AG04449 (cell line): ENCODE measurements at regions of chr11 and their contacts with region 1.

Region 1: GRCh38 chr11:75706260-75706729 is 11.3 kb upstream of the MOGAT2 start:
- DNase-seq: no peak
- H3K4me3 ChIP-seq: no peak overlapping the region
- CTCF ChIP-seq: peak; percentile 93

Region 2: DNA sequence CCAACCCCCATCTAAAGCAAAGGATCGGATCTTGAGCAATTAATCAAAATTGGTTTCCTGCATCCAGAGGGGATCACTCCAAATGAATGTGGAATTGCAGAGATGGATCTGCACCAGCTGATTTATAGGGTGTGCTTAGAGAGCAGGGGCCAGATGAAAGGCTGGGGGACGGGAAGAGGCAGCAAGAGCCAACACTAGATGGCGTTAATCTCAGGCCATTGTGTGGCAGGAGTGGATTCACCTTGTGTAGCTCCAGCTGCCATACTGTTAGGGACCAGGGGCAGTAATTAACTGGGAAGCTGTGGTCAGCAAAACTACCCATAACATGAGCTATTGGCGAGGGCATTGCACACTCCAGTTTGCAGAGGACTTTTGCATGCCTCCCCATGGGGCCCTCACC is 108.7 kb before region 1 on chr11:
- CTCF ChIA-PET with region 1: interaction called, 12 read pairs
- POLR2A ChIA-PET with region 1: no interaction called
- DNase-seq: no peak
- H3K4me3 ChIP-seq: no peak overlapping the region
- CTCF ChIP-seq: peak; percentile 66

Region 3: GRCh38 chr11:75678620-75679259 is 27.6 kb before region 1 on chr11:
- CTCF ChIA-PET with region 1: interaction called, 15 read pairs
- POLR2A ChIA-PET with region 1: no interaction called
- DNase-seq: no peak
- H3K4me3 ChIP-seq: no peak overlapping the region
- CTCF ChIP-seq: no peak

Region 4: DNA sequence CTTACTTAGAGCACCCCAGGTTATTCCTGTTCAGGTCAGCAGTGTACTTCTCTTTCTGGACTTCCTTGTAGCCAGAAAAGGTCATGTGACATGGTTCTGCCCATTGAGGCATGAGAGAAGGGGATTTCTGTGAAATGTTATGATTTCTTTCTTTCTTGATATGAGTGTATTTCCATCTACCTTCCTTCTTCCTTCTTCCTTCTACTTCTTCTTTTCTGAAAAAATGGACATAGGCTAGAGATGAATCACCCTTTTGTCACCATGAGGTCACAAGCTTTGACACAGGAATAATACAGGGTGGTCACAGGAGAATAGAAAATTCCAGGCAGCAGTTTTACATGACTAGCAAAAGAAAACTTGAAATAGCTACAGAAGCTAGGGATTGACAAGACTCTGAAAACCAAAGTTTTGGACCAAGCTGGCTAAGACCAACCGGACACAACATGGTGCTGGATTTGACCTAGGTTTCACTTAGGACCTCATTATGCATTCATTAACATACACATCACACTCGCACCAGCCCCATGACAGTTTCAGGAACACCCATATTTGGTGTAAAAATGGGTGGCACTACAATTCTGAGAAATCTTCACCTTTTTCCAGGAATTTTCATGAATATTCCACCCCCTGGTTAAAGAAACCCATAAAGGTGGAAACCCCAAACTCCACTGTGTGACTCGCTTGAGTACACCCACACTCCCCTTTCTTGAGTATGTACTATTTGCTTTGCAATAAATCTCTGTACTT is 16.3 kb before region 1 on chr11:
- CTCF ChIA-PET with region 1: interaction called, 15 read pairs
- POLR2A ChIA-PET with region 1: no interaction called
- DNase-seq: no peak
- H3K4me3 ChIP-seq: no peak overlapping the region
- CTCF ChIP-seq: no peak

Region 5: DNA sequence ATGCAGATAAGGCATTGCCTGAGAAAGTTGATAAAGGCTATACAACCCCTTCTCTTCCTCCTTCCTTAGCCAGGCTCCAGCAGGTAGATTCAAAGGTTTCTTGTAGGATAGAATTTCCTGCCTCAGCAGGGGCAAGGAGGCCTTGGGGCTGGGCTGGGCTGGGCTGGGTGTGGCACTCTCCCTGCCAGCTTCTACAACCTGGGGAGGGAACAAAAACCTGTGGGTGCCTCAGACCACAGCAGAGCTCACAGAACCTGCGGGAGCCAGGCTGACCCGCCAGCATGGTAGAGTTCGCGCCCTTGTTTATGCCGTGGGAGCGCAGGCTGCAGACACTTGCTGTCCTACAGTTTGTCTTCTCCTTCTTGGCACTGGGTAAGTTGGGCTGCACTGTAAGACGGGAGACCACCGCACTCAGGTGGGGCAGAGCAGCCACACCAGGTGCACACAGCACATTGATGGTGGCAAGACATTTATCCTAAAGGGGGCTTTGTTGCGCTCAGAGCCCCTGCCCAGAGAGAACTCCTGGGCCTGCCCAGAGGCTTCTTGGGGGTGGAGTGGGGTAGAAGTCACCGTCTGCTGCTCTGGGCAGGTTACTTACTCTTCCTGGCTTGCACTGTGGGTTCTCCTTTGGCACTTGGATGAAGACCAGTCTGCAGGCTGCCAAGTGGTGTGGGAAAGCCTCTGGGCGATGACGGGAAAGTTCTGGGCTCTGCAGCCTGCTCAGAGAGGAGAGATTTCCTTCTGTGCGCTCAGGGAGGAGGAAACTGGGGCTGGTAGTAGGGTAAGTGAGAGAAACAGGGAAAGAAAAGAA is 11.5 kb after region 1 on chr11 and contains the start of gene MOGAT2:
- CTCF ChIA-PET with region 1: interaction called, 17 read pairs
- POLR2A ChIA-PET with region 1: no interaction called
- DNase-seq: no peak
- H3K4me3 ChIP-seq: no peak within 1 kb of the TSS
- CTCF ChIP-seq: no peak